Activated T-helper 1 cell treated with anti-CD3 and anti-CD28 coated beads, Interleukin-12 subunit alpha, Interleukin-12 subunit beta, Interleukin-2, Interleukin-4 antibody, amounts not matched to agents 30 ng/mL and 10 ng/mL and 1 ng/mL, durations not matched to agents 14 hours and 24 hours and 36 hours (primary cell): ENCODE measurements at regions of chr10 and their contacts with region 1.

Region 1: DNA sequence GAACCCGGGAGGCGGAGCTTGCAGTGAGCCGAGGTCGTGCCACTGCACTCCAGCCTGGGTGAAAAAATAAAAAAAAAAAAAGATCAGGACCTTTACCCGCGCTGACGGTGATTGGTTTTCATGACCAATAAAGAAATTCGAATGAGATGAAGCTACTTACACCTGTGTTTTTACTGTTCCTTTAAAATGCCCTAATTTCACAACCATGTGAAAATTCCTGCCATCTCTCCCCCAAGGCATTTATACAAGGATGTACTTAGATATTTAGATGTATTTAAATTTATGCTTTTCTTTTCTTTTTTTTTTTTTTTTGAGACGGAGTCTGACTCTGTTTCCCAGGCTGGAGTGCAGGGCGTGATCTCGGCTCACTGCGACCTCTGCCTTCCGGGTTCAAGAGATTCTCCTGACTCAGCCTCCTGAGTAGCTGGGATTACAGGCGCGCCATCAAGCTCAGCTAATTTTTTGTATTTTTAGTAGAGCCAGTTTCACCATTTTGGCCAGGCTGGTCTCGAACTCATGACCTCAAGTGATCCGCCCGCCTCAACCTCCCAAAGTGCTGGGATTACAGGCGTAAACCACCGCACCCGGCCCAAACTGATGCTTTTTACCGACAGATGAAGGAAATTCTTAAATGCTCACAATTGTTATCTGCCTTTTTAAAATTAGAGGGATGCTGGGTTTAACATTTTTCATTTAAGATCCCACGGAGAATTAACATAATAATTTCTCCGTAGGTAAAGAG is 3.1 kb upstream of the PHYH start:
- DNase-seq: no peak
- H3K4me3 Mint-ChIP-seq: peak overlapping the region; percentile 82
- H3K27ac Mint-ChIP-seq: no peak overlapping the region
- H3K4me1 Mint-ChIP-seq: peaks cover 20% of the 10 kb centered on the region
- H3K27me3 Mint-ChIP-seq: no peaks in the 10 kb centered on the region

Region 2: GRCh38 chr10:12121673-12122072 is 1181.3 kb before region 1 on chr10:
- intact Hi-C with region 1: loop called (anchors 1 kb)
- DNase-seq: no peak
- H3K4me3 Mint-ChIP-seq: peak overlapping the region; percentile 59
- H3K27ac Mint-ChIP-seq: peak overlapping the region; percentile 95
- H3K4me1 Mint-ChIP-seq: peaks cover 34% of the 10 kb centered on the region
- H3K27me3 Mint-ChIP-seq: no peaks in the 10 kb centered on the region

Region 3: GRCh38 chr10:13099666-13100348 is 203.2 kb before region 1 on chr10 and contains the start of gene OPTN:
- intact Hi-C with region 1: loop called (anchors 1 kb)
- DNase-seq: peak; percentile 73
- H3K4me3 Mint-ChIP-seq: peak within 1 kb of the TSS; percentile 93
- H3K27ac Mint-ChIP-seq: peak within 1 kb of the TSS; percentile 92
- H3K4me1 Mint-ChIP-seq: peaks cover 55% of the 10 kb centered on the region
- H3K27me3 Mint-ChIP-seq: no peaks in the 10 kb centered on the region
- total RNA-seq, gene OPTN: 52.6 and 54.1 TPM in 2 replicates

Region 4: GRCh38 chr10:13271552-13272163 is 31.3 kb before region 1 on chr10:
- intact Hi-C with region 1: loop called (anchors 1 kb)
- DNase-seq: peak; percentile 16
- H3K4me3 Mint-ChIP-seq: no peak overlapping the region
- H3K27ac Mint-ChIP-seq: no peak overlapping the region
- H3K4me1 Mint-ChIP-seq: peaks cover 5% of the 10 kb centered on the region
- H3K27me3 Mint-ChIP-seq: no peaks in the 10 kb centered on the region

Region 5: DNA sequence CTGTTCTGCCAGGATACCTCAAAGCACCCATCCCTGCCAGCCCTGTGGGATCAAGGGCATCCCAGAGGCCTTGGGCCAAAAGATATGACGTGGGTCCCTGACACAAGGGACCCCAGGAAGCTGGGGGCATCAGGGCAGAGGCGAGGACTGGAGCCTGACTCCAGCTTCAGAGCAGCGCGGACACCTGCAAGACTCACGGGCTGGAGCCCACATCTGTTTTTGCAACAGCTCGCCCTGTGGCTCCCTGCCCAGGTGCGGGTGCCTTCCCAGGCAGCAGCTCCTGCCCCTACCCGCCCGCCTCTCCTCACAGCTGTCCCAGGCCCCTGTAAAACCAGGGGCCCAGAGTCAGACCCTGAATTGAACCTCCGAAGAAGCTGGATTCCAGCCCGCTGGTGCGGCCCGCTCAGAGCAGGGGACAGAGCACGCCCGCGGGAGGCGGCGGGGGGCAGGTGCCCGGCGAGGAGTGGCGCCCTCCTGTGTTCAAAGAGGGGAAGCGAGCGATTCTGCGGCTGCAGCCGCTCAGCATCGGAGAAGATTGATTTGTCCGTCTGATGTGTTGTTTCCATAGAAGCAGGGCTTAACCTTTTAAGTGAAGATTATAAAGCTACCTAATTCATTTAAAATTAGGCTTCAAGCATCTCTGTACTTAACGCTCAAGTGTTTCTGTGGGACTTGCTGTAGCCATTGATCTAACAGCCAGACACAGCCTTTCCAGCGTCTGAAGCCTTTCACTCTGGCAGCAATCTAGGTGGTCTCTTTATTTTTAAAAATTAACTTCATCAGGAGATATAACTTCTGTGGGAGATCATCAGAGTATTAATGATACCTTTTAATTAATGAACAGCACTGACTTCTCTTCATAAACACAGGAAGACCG is 137.4 kb after region 1 on chr10:
- intact Hi-C with region 1: loop called (anchors 1 kb)
- DNase-seq: peak; percentile 43
- H3K4me3 Mint-ChIP-seq: peak overlapping the region; percentile 58
- H3K27ac Mint-ChIP-seq: no peak overlapping the region
- H3K4me1 Mint-ChIP-seq: peaks cover 8% of the 10 kb centered on the region
- H3K27me3 Mint-ChIP-seq: peaks cover 30% of the 10 kb centered on the region

Region 6: GRCh38 chr10:13787015-13787421 is 484.0 kb after region 1 on chr10:
- intact Hi-C with region 1: loop called (anchors 2 kb)
- DNase-seq: peak; percentile 79
- H3K4me3 Mint-ChIP-seq: peak overlapping the region; percentile 68
- H3K27ac Mint-ChIP-seq: peak overlapping the region; percentile 95
- H3K4me1 Mint-ChIP-seq: peaks cover 7% of the 10 kb centered on the region
- H3K27me3 Mint-ChIP-seq: peaks cover 2% of the 10 kb centered on the region